ENCODE measurements at regions of chr19 and their contacts with region 1.

Region 1: DNA sequence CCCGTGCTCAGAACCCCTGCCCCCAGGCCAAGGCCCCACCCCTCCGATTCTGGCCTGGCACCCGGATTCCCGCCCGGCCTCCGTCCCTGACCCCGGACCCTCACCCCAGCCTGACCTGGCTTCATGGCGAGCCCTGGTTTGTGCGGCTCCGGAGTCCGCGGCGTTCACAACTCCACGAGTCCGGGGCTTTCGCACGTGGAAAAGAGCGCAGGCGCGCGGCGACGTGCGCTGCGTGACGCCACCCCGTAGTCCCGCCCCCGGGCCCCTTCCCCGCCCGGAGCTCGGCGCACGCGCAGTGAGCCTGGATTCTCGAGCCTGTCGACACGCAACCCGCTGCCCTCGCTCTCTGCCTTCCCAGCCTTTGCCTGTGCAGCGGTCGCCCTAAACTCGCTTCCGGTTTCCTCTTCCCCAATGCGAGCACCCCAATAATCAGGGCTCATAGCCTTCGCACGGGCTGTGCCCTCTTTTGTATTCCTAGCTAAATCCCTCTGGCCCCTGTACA is at the start of gene FBL:
- DNase-seq: peak; percentile 99
- CTCF ChIP-seq: no peak

Region 2: GRCh38 chr19:39319892-39320248 is 526.4 kb before region 1 on chr19:
- in situ Hi-C with region 1: no loop called
- DNase-seq: no peak
- CTCF ChIP-seq: no peak

Region 3: DNA sequence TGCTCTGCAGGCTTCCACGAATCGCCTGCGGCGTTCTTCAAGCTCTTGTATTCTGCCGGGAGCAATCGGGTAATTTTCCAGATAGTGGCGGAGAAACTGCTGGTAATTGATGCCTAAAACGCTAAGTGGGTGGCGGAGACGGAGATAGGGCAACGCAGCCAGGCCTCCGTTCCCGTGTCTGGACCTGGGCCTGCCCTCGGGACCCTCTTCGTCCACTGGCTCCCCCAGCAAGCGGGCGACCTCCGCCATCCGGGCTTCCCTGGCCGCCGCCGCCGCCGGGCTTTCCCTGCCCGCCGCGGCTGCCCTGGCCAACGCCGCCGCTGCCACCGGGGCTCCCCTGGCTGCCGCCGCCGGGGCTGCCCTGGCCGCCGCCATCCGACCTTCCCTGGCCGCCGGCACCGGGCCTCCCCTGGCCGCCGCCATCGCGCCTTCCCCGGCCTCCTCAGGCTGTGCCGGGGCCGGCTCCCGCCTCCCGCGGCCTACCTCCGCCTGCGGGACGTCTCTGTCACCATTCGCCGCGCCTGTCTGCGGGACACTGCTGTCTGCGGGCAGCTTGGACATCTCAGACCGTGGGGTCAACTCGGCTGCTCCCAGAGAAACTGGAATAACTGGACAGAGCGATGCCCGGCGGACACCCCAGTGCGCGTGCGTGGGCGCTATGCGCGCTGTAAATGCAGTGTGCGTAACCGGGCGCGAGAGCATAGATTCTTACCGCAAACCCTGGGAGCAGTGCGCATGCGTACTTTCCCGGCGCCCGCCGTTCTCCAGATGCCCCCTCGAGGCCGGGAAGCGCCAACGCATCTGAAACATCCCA is 306.5 kb before region 1 on chr19 and contains the start of gene EID2:
- in situ Hi-C with region 1: loop called (anchors 10 kb)
- DNase-seq: peak; percentile 97
- CTCF ChIP-seq: peak; percentile 85

Region 4: DNA sequence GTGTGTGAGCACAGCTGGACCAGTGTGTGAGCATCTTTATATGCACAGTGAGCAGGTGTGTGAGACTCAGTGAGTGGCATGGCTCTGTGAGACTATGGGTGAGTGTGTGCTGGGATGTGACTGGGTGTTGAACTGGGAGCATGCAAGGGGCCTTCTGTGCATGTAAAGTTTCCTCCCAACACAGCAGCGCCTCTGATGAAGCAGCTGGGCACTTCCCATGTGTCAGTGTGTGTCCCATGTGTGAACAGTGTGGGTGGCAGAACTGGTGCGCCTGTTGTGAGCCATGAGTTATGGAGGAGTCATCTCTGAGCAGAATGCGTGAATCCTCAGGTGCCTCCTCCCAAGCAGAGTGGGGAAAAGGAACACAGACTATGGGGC is 166.4 kb before region 1 on chr19:
- in situ Hi-C with region 1: loop called (anchors 10 kb)
- DNase-seq: no peak
- CTCF ChIP-seq: no peak

Region 5: DNA sequence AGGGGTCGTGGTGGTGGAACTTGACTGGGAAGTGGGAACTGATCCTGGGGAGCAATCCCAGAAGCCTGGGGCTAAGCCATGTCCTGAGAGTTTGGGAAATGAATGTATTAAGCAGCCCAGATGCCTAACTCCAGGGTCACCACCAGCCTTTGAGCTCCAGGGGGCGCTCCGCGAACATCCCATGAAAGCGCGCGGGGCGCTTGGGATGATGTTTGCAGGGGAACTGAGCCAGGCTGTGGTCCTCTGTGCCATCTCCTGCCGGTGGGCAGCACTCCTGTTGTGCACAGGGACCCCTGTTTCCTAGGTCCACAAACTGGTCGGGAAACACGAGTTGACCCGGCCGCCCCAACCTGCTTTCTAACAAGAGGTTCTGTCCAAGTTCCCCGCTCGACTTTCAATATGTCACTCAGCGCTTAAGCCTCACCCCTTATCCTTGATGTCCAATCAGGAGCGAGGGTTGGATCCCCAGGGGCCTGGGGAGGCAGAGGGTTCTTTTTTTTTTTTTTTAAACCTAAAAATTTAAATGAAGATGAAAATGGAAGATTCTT is 53.2 kb before region 1 on chr19:
- in situ Hi-C with region 1: loop called (anchors 10 kb)
- DNase-seq: peak; percentile 83
- CTCF ChIP-seq: peak; percentile 92